ENCODE measurements at regions of chrX and their contacts with region 1.

Region 1: GRCh38 chrX:64908121-64908520 is 68.1 kb downstream of the ZC4H2 start:
- DNase-seq: no peak
- H3K4me3 ChIP-seq: no peak overlapping the region
- H3K27ac ChIP-seq: no peak overlapping the region
- H3K4me1 ChIP-seq: no peaks in the 10 kb centered on the region
- H3K27me3 ChIP-seq: peaks cover 0 to 3% of the 10 kb centered on the region in 2 donors
- CTCF ChIP-seq: no peak
- POLR2A ChIP-seq: no peak

Region 2: GRCh38 chrX:64093761-64094160 is 814.4 kb before region 1 on chrX:
- intact Hi-C with region 1: loop called (anchors 5 kb)
- DNase-seq: no peak
- H3K4me3 ChIP-seq: no peak overlapping the region
- H3K27ac ChIP-seq: no peak overlapping the region
- H3K4me1 ChIP-seq: no peaks in the 10 kb centered on the region
- H3K27me3 ChIP-seq: no peaks in the 10 kb centered on the region
- CTCF ChIP-seq: peak in 1 of 3 donors; percentile 9
- POLR2A ChIP-seq: no peak

Measured in breast epithelium (tissue), 4 donors.